ENCODE measurements at regions of chr2 and their contacts with region 1.

Region 1: DNA sequence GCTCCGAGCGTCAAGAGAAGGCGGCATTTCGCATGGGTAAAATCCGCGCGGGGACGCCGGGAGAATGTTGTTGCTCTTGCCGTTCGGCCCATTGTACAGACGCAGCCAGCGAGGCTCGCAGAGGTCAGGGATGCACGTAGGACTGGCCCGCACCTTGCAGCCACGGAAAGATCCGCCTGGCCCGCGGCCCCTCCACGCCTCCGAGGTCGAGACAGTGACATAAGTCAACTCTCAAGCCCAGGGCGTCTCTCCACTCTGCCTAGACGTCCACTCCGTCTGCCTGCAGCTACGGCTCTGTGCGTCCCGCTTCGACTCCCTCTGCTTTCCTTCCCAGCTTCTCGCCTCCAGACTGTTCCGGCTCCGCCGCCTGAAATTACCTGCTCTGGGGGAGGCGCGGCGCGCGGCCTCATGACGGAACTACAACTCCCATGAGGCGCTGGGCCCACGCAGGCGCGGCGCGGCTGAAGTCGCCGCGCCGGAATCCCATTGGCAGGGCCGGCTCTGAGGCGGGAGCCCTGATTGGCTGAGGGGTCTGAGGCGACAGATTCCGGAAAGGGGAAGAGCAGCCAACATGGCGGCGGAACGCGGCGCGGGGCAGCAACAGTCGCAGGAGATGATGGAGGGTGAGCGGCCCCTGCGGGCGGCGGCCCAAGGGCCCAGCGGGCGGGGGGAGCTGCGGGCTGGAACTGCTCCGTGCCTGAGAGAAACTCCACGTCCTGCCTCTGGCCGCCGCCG is at the start of gene PPP1R7:
- DNase-seq: peak; percentile 95 to 96
- H3K4me3 ChIP-seq: peak within 1 kb of the TSS; percentile 86 to 97
- H3K27ac ChIP-seq: peak within 1 kb of the TSS; percentile 82 to 90
- H3K4me1 ChIP-seq: peaks cover 0 to 26% (median 16%) of the 10 kb centered on the region in 4 donors
- H3K27me3 ChIP-seq: no peaks in the 10 kb centered on the region
- CTCF ChIP-seq: peak in 1 of 2 experiments; percentile 14

Region 2: GRCh38 chr2:240595496-240596470 is 554.3 kb before region 1 on chr2:
- intact Hi-C with region 1: loop called (anchors 10 kb)
- DNase-seq: peak in 1 of 2 donors; percentile 62
- H3K4me3 ChIP-seq: peak overlapping the region in 1 of 2 donors; percentile 21
- H3K27ac ChIP-seq: peak overlapping the region; percentile 7 to 43
- H3K4me1 ChIP-seq: peaks cover 0 to 31% (median 20%) of the 10 kb centered on the region in 4 donors
- H3K27me3 ChIP-seq: no peaks in the 10 kb centered on the region
- CTCF ChIP-seq: peak in 1 of 2 experiments; percentile 9

Region 3: DNA sequence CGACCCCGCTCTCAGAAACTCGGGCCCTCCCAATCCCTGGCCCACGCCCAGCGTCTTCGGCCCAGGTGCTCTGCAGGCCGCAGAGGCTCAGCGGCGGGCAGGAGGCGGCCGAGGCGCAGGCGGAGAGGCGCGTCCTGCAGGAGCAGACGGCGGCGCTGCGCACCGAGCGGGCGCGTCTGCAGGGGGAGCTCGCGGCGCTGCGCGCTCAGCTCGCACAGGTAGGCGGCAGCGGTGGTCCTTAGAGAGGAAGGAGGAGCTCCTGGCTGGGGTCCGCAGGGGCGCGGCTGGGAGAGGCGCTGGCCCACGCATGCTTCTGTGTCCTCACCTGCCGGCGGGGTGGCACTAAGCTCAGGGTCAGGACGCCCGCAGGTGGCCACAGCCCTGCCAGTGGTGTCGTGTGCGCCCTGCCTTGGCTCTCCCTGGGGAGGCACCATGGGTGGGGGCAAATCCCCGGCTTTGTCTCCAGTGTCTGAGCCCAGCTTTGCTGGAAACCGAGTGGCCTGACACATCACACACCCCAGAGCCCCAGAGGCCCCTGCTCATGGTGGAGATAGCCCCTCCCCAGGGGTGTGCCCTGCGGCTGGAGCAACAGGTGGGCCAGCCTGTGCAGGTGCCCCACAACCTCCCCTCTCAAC is 166.6 kb before region 1 on chr2:
- intact Hi-C with region 1: no loop called
- DNase-seq: peak; percentile 20 to 63
- H3K4me3 ChIP-seq: no peak overlapping the region
- H3K27ac ChIP-seq: no peak overlapping the region
- H3K4me1 ChIP-seq: peaks cover 0 to 28% (median 20%) of the 10 kb centered on the region in 4 donors
- H3K27me3 ChIP-seq: peaks cover 0 to 34% of the 10 kb centered on the region in 2 donors
- CTCF ChIP-seq: peak; percentile 27 to 42

Region 4: DNA sequence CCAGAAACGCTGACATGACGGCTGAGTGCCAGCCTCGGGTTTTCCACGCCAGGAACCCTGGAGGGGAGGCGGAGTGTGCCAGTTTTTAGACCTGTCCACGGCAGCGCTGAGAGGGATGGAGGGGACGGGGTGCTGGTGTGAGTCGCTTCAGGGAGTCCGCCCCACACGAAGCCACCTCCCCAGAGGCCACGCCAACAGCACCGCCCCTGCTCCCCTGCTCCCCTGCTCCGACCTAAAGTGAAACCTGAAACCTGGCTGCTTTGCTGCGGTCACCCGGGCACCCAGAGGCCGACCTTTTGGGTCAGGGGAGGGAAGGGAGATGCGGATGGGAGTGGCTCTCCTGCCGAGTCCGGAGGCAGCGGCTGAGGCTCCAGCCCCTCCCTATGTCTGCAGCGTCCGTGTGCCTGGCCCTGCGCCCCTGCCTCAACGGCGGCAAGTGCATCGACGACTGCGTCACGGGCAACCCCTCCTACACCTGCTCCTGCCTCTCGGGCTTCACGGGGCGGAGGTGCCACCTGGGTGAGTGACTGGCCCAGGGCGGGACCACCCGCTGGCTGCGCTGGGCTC is 113.6 kb before region 1 on chr2:
- intact Hi-C with region 1: no loop called
- DNase-seq: peak in 1 of 2 donors; percentile 68
- H3K4me3 ChIP-seq: peak overlapping the region; percentile 30 to 41
- H3K27ac ChIP-seq: no peak overlapping the region
- H3K4me1 ChIP-seq: peaks cover 0 to 18% (median 14%) of the 10 kb centered on the region in 4 donors
- H3K27me3 ChIP-seq: peaks cover 0 to 21% of the 10 kb centered on the region in 2 donors
- CTCF ChIP-seq: no peak

Measured in tibial artery (tissue), 4 donors.